Astrocyte of the cerebellum (primary cell): ENCODE measurements at regions of chr18 and their contacts with region 1.

Region 1: DNA sequence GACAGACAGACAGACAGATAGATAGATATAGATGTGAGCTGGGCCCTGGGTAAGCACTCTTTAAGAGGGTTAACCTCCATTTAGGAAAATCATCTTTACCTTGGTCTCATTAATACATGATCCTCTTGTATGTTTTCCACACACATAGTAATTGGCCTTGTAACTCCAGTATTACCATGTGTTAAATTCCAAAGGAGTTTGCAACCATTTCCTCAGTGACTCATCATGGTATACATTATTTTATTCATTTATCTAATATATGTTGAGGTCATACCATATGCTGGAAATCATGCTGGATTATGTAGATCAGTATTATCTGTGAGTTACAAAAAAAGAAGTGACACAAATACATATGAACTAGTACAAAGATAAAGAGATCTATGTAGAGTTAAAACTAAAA is 504.3 kb downstream of the DCC start:
- DNase-seq: no peak
- H3K4me3 ChIP-seq: no peak overlapping the region
- CTCF ChIP-seq: no peak

Region 2: GRCh38 chr18:52481116-52481515 is 363.2 kb before region 1 on chr18:
- in situ Hi-C with region 1: no loop called
- DNase-seq: no peak
- H3K4me3 ChIP-seq: no peak overlapping the region
- CTCF ChIP-seq: no peak

Region 3: DNA sequence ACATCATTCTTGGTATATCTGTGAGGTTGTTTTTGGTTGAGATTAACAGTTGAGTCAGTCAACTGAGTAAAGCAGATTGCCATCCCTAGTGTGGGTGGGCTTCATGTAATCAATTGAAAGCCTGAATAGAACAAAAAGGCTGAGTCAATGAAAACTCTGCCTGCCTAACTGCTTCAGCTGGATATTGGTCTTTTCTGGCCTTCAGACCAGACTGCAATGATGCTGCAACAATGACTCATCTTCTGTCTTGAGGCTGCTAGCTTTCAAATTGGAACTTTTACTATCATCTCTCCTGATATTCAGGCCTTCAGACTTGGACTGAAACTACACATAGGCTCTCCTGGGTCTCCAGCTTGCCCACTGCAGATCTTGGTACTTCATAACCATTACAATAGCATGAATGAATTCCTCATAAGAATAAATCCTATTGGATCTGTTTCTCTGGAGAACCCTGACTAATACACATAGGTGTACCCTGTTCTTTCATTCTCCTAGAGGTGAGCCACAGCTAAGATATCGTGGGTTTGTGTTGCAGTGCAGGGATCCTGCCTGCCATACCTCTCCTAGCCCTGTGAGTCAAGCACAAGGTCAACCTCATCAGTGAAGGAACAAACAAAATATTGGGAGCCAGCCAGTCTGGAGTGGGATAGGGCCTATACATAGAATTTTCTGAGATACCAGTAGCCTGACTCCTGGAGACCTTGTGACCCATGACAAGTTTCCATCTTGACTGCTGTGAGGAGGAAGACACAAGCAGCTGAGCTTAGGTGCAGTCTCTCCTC is 30.5 kb before region 1 on chr18:
- in situ Hi-C with region 1: no loop called
- DNase-seq: no peak
- H3K4me3 ChIP-seq: no peak overlapping the region
- CTCF ChIP-seq: no peak

Region 4: GRCh38 chr18:52903857-52904256 is 59.5 kb after region 1 on chr18:
- in situ Hi-C with region 1: loop called (anchors 10 kb)
- DNase-seq: no peak
- H3K4me3 ChIP-seq: no peak overlapping the region
- CTCF ChIP-seq: peak; percentile 49